ENCODE measurements at regions of chr12 and their contacts with region 1.

Region 1: GRCh38 chr12:64660237-64661018 is 50.1 kb downstream of the RASSF3 start:
- DNase-seq: no peak
- H3K4me3 ChIP-seq: no peak overlapping the region
- H3K27ac ChIP-seq: 0 out of 2 replicates have a peak overlapping the region, but pooled peaks have one; percentile 10
- H3K4me1 ChIP-seq: peaks cover 30% of the 10 kb centered on the region
- H3K27me3 ChIP-seq: no peaks in the 10 kb centered on the region
- CTCF ChIP-seq: no peak

Region 2: GRCh38 chr12:64639466-64639865 is 21.0 kb before region 1 on chr12:
- CTCF ChIA-PET with region 1: no interaction called
- POLR2A ChIA-PET with region 1: interaction called, 15 read pairs
- intact Hi-C with region 1: no loop called
- DNase-seq: peak; percentile 23 to 91
- H3K4me3 ChIP-seq: peak overlapping the region; percentile 10; the same call in 1 of the 2 replicates
- H3K27ac ChIP-seq: peak overlapping the region; percentile 92
- H3K4me1 ChIP-seq: peaks cover 50% of the 10 kb centered on the region
- H3K27me3 ChIP-seq: no peaks in the 10 kb centered on the region
- CTCF ChIP-seq: no peak